ENCODE measurements at regions of chr14 and their contacts with region 1.

Region 1: GRCh38 chr14:32090686-32091085 is 13.6 kb downstream of the ARHGAP5 start:
- DNase-seq: no peak
- H3K4me3 Mint-ChIP-seq: no peak overlapping the region
- H3K27ac Mint-ChIP-seq: no peak overlapping the region
- H3K4me1 Mint-ChIP-seq: peaks cover 20% of the 10 kb centered on the region
- H3K27me3 Mint-ChIP-seq: no peaks in the 10 kb centered on the region

Region 2: DNA sequence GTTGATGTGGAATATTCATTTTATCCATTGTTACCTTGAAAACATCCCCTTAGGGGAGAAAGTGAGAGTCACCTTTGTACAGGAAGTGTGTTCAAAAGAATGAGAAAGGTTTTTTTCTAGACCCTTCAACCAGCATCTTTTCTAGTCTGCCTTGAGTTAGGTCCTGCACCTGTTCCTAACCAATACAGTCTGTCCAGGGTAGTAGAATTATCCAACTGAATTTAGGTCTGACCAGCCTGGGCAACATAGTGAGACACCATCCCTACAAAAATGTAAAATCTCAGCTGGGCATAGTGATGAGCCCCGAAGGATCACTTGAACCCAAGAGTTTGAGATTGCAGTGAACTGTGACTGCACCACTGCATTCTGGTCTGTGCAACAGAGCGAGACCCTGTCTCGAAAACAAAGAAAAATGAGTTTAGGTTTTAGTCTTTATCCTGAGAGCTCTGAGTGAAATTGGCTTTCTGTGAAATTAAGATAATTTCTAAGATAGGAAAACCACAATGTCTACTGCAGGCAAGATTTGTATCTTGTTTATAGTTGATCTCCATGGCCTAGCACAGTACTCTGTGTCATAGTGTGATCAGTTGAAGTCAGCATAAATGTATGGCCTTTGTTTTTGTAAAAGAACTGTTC is 11.6 kb after region 1 on chr14:
- CTCF ChIA-PET with region 1: no interaction called
- intact Hi-C with region 1: loop called (anchors 1 kb)
- DNase-seq: peak; percentile 16
- H3K4me3 Mint-ChIP-seq: peak overlapping the region; percentile 5
- H3K27ac Mint-ChIP-seq: peak overlapping the region; percentile 71
- H3K4me1 Mint-ChIP-seq: peaks cover 40% of the 10 kb centered on the region
- H3K27me3 Mint-ChIP-seq: no peaks in the 10 kb centered on the region

Measured in activated naive CD4-positive, alpha-beta T cell treated with anti-CD3 and anti-CD28 coated beads for 36 hours (primary cell).